Mammary epithelial cell (primary cell): ENCODE measurements at regions of chr5 and their contacts with region 1.

Region 1: DNA sequence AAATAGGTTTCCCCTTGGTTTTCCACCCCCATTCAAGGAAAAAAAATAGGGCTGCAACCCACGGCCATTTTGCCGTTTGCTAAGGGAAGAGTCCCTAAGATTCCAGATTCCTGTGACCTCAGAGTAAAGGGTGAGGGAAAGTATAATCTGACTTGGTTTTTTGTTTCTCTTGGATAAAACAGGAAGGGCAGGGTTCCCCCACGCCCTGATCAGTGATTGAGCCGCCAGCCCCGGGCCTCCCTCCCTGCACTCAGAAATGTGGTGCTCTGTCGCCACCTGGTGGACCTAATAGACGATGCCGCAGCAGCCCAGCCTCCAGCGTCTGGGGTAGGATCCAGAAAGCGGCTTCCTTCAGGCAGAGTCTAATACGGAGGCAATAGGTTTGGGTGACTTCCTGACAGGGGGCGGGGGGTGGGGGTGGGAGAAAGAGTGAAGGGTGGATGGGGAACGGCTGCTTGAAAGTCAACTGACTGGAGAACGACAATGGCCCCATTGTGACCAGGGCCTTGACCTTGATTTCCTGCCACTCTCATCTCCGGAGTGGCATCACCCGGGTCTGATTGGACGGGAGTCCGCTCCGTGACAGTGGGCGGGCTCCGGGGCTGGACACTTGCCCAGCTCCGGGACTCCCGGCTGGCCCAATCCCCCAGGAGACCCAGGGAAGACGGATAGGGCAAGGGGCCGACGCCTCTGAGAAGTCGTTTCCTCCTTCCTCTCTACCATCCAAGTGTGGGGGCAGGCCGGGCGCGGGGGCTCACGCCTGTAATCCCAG is 17.8 kb upstream of the CYSTM1 start:
- DNase-seq: peak; percentile 66
- H3K4me3 ChIP-seq: peak overlapping the region in 2 of 3 experiments; percentile 23 to 41
- H3K27ac ChIP-seq: peak overlapping the region; percentile 9
- H3K4me1 ChIP-seq: peaks cover 8% of the 10 kb centered on the region
- H3K27me3 ChIP-seq: no peaks in the 10 kb centered on the region
- CTCF ChIP-seq: peak; percentile 73 to 90

Region 2: GRCh38 chr5:138289296-138289695 is 1867.9 kb before region 1 on chr5:
- CTCF ChIA-PET with region 1: no interaction called
- dilution Hi-C with region 1: no loop called
- in situ Hi-C with region 1: no loop called
- intact Hi-C with region 1: no loop called
- DNase-seq: no peak
- H3K4me3 ChIP-seq: no peak overlapping the region
- H3K27ac ChIP-seq: no peak overlapping the region
- H3K4me1 ChIP-seq: no peaks in the 10 kb centered on the region
- H3K27me3 ChIP-seq: no peaks in the 10 kb centered on the region
- CTCF ChIP-seq: no peak

Region 3: GRCh38 chr5:140107312-140108083 is 49.7 kb before region 1 on chr5:
- CTCF ChIA-PET with region 1: no interaction called
- dilution Hi-C with region 1: no loop called
- in situ Hi-C with region 1: no loop called
- intact Hi-C with region 1: loop called (anchors 2 kb)
- DNase-seq: peak; percentile 92
- H3K4me3 ChIP-seq: peak overlapping the region; percentile 83 to 97 (median 88)
- H3K27ac ChIP-seq: peak overlapping the region; percentile 85
- H3K4me1 ChIP-seq: peaks cover 13% of the 10 kb centered on the region
- H3K27me3 ChIP-seq: no peaks in the 10 kb centered on the region
- CTCF ChIP-seq: peak in 1 of 2 donors; percentile 26